ENCODE measurements at regions of chr3 and their contacts with region 1.

Region 1: GRCh38 chr3:112642912-112643506 is 2.1 kb upstream of the CCDC80 start:
- ATAC-seq: peak; percentile 52 to 99 (median 93)
- H3K4me3 ChIP-seq: peak overlapping the region in 1 of 5 donors; percentile 18
- H3K27ac ChIP-seq: no peak overlapping the region
- H3K4me1 ChIP-seq: peaks cover 16 to 19% of the 10 kb centered on the region in 2 donors

Region 2: DNA sequence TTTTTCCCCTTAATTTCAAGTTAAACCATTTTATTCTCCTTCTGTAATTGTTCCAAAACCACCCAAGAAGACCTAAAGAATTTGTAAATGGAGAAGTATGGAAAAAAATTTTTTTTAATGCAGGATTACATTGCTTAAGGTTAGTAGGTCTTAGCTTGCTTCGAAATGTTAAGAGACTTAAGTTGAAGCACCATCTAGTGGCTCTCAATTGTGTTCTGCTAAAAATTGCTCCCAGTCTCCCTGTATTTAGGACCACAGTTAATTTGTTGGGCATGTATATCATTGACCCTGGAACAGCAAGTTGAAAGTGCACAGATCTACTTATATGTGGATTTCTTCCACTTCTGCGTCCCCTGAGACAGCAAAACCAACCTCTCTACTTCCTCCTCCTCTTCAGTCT is 171.3 kb after region 1 on chr3:
- in situ Hi-C with region 1: loop called in 2 of 9 experiments (anchors 5 to 25 kb)
- ATAC-seq: peak in 4 of 8 experiments; percentile 15 to 75 (median 28)
- H3K4me3 ChIP-seq: no peak overlapping the region
- H3K27ac ChIP-seq: no peak overlapping the region
- H3K4me1 ChIP-seq: no peaks in the 10 kb centered on the region

Region 3: DNA sequence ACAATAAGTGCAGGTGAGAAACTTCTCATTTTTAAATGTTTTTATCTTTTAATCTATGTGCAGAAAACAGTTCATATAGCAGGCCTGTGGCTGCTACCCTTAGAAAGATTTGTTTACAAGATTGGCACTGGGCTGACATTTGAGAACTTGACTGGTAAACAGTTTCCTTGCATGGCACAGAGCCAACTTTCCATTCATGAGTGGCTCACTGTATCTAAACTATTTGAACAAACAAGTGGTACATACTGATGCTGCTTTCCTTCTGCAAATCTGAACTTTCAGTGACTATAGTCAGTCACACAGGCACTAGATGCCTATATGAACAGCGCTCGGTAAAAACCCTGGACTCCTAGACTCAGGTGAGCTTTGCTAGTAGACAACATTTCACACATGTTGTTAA is 341.5 kb after region 1 on chr3:
- in situ Hi-C with region 1: loop called in 8 of 9 experiments (anchors 10 to 25 kb)
- ATAC-seq: no peak
- H3K4me3 ChIP-seq: no peak overlapping the region
- H3K27ac ChIP-seq: no peak overlapping the region
- H3K4me1 ChIP-seq: no peaks in the 10 kb centered on the region

Region 4: GRCh38 chr3:112990672-112991602 is 347.9 kb after region 1 on chr3 and contains the start of gene GTPBP8:
- in situ Hi-C with region 1: loop called in 8 of 9 experiments (anchors 10 to 25 kb)
- ATAC-seq: peak; percentile 95 to 98 (median 97)
- H3K4me3 ChIP-seq: peak within 1 kb of the TSS; percentile 80 to 97 (median 91)
- H3K27ac ChIP-seq: peak within 1 kb of the TSS; percentile 95 to 97
- H3K4me1 ChIP-seq: peaks cover 6 to 16% of the 10 kb centered on the region in 2 donors
- total RNA-seq, gene GTPBP8: 16.8 to 31.2 (median 23.9) TPM

Region 5: DNA sequence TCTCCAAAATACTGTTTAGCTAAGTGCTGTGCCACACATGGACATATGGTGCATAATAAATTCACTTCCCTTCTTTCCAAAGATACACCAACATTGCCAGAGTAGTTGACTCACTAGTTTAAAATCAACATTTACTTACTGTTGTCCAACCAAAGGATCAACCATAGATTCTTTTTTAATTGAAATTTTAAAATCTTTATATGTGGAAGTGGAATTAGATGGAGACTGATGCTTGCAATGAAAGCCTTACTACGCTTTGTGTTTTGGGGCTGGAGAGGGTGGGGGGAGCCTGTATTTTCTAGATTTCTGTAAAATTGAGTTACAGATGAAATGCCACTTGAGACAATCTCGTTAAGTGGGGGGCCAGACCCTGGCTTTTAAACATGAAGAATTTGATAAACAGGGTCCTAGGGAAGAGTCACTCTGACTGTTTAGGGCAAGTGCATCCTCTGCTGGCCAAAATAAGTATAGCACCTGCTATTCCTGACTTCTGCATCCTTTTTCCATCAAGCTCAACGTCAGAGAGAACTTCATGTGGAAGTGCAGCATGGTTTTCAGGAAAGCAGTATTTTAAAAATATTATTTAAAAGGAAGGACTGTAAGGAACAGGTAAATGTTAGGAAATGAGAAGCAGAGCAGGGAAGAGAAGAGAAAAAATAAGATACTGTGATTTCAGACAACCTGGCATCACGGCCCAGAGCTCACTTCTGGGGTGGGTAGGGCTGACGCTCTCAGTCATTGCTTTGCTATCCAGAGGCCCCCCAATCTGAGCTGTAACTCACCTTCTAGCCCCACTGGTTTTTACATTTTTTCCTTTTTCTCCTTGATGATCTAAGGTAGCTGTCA is 645.0 kb after region 1 on chr3:
- in situ Hi-C with region 1: loop called in 1 of 9 experiments (anchors 25 kb)
- ATAC-seq: peak; percentile 44 to 76 (median 60)
- H3K4me3 ChIP-seq: no peak overlapping the region
- H3K27ac ChIP-seq: no peak overlapping the region
- H3K4me1 ChIP-seq: peaks cover 0 to 2% of the 10 kb centered on the region in 2 donors